HCT116 (cell line): ENCODE measurements at regions of chr1 and their contacts with region 1.

Region 1: DNA sequence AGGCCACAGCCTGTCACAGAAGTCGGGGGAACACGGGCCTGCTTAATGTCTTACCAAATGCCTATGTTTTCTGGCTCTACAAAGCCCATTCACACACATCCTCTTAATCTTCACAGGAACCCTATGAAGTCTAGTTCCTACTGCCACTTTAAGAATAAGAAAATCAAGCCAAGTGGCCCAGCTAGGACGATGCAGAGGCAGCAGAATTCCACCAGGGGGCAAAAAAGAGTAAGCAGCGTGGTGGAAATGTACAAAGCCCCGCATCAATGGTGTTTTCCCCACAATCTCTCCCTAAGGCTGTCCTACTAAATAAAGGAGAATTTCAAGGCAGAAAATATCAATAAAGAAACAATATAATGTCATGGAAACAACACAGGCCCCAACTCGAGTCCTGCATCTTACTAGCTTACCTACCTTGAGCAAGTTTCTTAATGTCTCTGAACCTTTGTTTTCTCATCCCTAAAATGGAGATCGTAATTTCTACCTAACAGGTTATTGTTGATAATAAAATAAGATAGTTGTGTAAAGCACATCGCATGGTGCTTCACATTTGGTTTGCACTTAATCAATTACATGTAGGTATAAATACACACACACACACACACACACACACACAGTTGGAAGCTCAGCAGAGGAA is 21.4 kb downstream of the SEC16B start:
- DNase-seq: peak; percentile 55
- ATAC-seq: peak; percentile 79
- H3K4me3 ChIP-seq: no peak overlapping the region
- H3K27ac ChIP-seq: no peak overlapping the region
- H3K4me1 ChIP-seq: no peaks in the 10 kb centered on the region
- H3K27me3 ChIP-seq: no peaks in the 10 kb centered on the region
- CTCF ChIP-seq: peak; percentile 75 to 94 (median 91)
- POLR2A ChIP-seq: no peak
- RAD21 ChIP-seq: peak; percentile 77

Region 2: DNA sequence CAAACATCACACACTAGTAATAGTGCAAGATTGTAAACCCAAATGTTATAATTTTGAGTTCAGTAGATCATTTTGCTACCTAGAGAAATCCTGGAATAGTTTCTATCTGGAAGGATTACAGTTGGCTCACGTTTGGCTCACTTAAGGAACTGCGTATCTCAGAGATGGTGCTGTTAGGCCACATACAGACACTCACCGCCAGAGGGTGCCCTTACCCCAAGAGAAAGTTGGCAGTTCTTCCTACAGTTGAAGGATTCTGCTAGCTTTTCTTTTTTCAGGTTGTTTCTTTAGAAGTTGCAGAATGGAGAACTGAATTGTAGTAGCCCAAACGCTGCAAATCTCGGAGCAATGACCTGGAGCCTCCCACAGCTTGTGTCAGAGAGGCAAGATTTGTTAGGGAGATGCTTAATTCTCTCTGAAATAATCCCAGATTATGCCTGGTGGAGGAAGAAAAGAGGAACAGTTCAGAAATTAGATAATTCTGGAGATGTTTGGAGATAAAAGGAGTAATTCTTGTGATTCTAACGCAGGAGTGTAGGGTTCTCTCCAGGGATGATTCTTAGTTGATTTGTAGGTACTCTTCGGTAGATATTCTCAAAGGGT is 1573.4 kb before region 1 on chr1:
- CTCF ChIA-PET with region 1: no interaction called
- POLR2A ChIA-PET with region 1: no interaction called
- RAD21 ChIA-PET with region 1: no interaction called
- intact Hi-C with region 1: loop called (anchors 5 kb)
- DNase-seq: peak; percentile 51
- ATAC-seq: peak; percentile 93
- H3K4me3 ChIP-seq: no peak overlapping the region
- H3K27ac ChIP-seq: no peak overlapping the region
- H3K4me1 ChIP-seq: no peaks in the 10 kb centered on the region
- H3K27me3 ChIP-seq: peaks cover 26% of the 10 kb centered on the region; the same call in 1 of the 2 replicates
- CTCF ChIP-seq: peak; percentile 68 to 95 (median 92)
- POLR2A ChIP-seq: no peak
- RAD21 ChIP-seq: peak; percentile 83

Region 3: GRCh38 chr1:176897350-176898236 is 1050.9 kb before region 1 on chr1:
- CTCF ChIA-PET with region 1: interaction called, 12 read pairs
- POLR2A ChIA-PET with region 1: no interaction called
- RAD21 ChIA-PET with region 1: interaction called in 1 of 2 experiments, 4 read pairs
- intact Hi-C with region 1: loop called (anchors 1 kb)
- DNase-seq: peak; percentile 39
- ATAC-seq: peak; percentile 95
- H3K4me3 ChIP-seq: no peak overlapping the region
- H3K27ac ChIP-seq: no peak overlapping the region
- H3K4me1 ChIP-seq: no peaks in the 10 kb centered on the region
- H3K27me3 ChIP-seq: peaks cover 29% of the 10 kb centered on the region
- CTCF ChIP-seq: peak; percentile 70 to 83 (median 81); a peak in 5 of 6 replicates
- POLR2A ChIP-seq: no peak
- RAD21 ChIP-seq: peak; percentile 67

Region 4: DNA sequence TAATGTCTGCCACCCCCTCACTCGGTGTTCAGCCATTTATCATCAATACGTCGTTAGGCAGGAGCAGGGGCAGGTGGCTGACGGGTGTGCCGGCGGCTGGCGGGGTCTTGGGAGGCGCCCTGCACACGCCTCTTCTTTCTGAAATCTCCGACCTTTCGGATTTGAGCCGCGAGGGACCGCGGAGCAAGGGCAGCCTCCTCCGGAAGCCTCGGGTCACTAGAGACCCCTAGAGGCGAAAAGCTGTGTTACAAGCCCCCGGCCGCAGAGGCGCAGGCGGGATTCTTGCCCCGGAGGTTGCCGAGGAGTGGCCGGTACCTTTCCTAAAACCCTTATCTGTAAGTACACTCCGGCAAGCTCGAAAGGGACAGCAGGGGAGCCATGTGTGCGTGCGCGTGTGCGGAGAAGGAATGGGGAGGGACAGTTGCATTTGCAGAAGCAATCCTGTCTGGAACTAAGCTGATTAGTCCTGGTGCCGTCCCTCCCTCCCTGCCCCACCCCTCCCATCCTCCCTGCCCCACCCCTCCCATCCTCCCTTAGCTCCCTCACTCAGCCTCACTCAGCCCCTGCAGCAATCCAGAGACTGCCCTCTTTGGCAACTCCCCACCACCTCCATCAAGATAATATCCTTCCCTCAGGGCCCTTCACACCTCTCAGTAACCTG is 766.7 kb before region 1 on chr1:
- CTCF ChIA-PET with region 1: no interaction called
- POLR2A ChIA-PET with region 1: no interaction called
- RAD21 ChIA-PET with region 1: no interaction called
- intact Hi-C with region 1: loop called (anchors 10 kb)
- DNase-seq: peak; percentile 33
- ATAC-seq: peak; percentile 97
- H3K4me3 ChIP-seq: peak overlapping the region in 1 of 2 experiments; percentile 16; a peak in 1 of 4 replicates
- H3K27ac ChIP-seq: no peak overlapping the region
- H3K4me1 ChIP-seq: peaks cover 0 to 4% of the 10 kb centered on the region in 2 experiments; a peak in 1 of 4 replicates
- H3K27me3 ChIP-seq: 0 out of 2 replicates have a peak, but pooled peaks cover 13% of the 10 kb centered on the region
- CTCF ChIP-seq: peak; percentile 54 to 84 (median 77)
- POLR2A ChIP-seq: no peak
- RAD21 ChIP-seq: peak; percentile 69

Region 5: GRCh38 chr1:178220094-178220493 is 271.6 kb after region 1 on chr1:
- CTCF ChIA-PET with region 1: no interaction called
- POLR2A ChIA-PET with region 1: no interaction called
- RAD21 ChIA-PET with region 1: no interaction called
- intact Hi-C with region 1: no loop called
- DNase-seq: no peak
- ATAC-seq: no peak
- H3K4me3 ChIP-seq: no peak overlapping the region
- H3K27ac ChIP-seq: no peak overlapping the region
- H3K4me1 ChIP-seq: no peaks in the 10 kb centered on the region
- H3K27me3 ChIP-seq: no peaks in the 10 kb centered on the region
- CTCF ChIP-seq: no peak
- POLR2A ChIP-seq: no peak
- RAD21 ChIP-seq: no peak

Region 6: DNA sequence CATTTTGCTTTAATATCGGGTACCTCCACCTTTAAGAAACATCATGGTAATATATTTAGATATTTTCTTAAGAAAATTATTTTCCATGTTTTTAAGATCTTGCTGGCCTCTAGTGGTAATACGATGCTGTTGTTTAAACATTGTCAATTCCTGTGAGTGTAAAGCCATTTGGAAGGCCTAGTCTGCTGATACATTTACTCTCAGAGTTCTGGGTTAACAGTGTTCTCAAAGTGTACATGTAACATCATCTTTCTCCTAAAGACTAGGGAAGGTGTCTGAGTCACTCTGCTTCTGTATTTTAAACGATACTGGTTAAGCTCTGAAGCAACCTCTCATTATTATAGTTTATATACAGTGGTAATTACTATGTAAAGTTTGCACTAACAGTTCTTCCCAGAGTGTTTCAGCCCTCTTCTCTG is 334.5 kb after region 1 on chr1:
- CTCF ChIA-PET with region 1: interaction called, 9 read pairs
- POLR2A ChIA-PET with region 1: no interaction called
- RAD21 ChIA-PET with region 1: no interaction called
- intact Hi-C with region 1: loop called (anchors 1 kb)
- DNase-seq: peak; percentile 26
- ATAC-seq: peak; percentile 70
- H3K4me3 ChIP-seq: no peak overlapping the region
- H3K27ac ChIP-seq: no peak overlapping the region
- H3K4me1 ChIP-seq: no peaks in the 10 kb centered on the region; a peak in 1 of 4 replicates
- H3K27me3 ChIP-seq: no peaks in the 10 kb centered on the region
- CTCF ChIP-seq: peak; percentile 48 to 81 (median 55)
- POLR2A ChIP-seq: no peak
- RAD21 ChIP-seq: peak; percentile 84